Right ventricle myocardium inferior (tissue), 1 donor: ENCODE measurements at regions of chr10 and their contacts with region 1.

Region 1: GRCh38 chr10:14878266-14879054 is at the start of gene SUV39H2:
- DNase-seq: peak; percentile 98
- ATAC-seq: peak; percentile 99
- total RNA-seq, gene SUV39H2: 4.9 TPM

Region 2: GRCh38 chr10:14604181-14605142 is 274.0 kb before region 1 on chr10:
- intact Hi-C with region 1: loop called (anchors 5 kb)
- DNase-seq: peak; percentile 93
- ATAC-seq: peak; percentile 98

Region 3: GRCh38 chr10:14954001-14954770 is 75.7 kb after region 1 on chr10 and contains the start of gene DCLRE1C:
- intact Hi-C with region 1: loop called (anchors 5 kb)
- DNase-seq: peak; percentile 95
- ATAC-seq: peak; percentile 99
- total RNA-seq, gene DCLRE1C: 4.2 TPM

Region 4: GRCh38 chr10:15097011-15097812 is 218.8 kb after region 1 on chr10 and contains the start of gene RPP38:
- intact Hi-C with region 1: loop called (anchors 5 kb)
- DNase-seq: peak; percentile 98
- ATAC-seq: peak; percentile 99
- total RNA-seq, gene RPP38: 9.1 TPM